ENCODE measurements at regions of chr1 and their contacts with region 1.

Region 1: GRCh38 chr1:13469343-13469742 is 44.5 kb downstream of the LRRC38 start:
- DNase-seq: no peak

Region 2: GRCh38 chr1:13543451-13544220 is 74.3 kb after region 1 on chr1:
- intact Hi-C with region 1: loop called (anchors 2 kb)
- DNase-seq: peak; percentile 79

Region 3: DNA sequence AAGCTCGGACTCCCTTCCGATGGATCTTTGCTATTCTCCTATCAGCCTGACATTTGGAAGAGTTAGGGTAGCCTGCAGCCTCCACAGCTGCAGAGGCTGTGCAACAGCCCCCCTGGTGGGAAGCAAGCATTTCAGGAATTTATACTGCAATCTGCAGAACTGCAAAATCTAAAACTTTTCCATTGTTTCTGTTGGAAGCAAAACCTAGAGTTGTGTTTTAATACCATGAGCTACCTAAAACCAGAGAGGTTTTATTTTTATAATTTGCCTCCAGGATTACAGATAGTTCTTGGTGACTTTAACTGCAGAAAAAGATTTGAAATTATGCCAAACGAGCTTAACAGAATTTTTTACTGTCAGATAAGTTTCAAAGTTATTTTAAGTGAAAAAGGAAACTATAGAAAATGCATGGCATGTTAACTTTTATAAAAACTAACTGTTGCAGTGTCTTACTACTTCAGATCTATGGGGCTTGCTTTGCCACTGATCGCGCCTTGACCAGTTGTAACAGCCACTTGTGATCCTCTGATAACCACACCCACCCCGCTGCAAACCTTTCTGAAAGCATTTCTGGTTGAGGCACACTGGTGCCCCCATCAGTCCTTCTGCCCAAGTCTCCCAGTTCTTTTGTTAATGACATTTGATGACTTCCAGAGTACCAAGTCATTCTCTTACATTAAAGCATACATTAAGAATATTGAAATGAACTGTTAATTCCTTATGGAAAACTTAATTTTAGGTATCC is 295.4 kb after region 1 on chr1:
- intact Hi-C with region 1: no loop called
- DNase-seq: no peak

Measured in cardiac septum (tissue), 1 donor.